ENCODE measurements at regions of chr6 and their contacts with region 1.

Region 1: GRCh38 chr6:116277124-116277523 is 2.6 kb downstream of the TSPYL1 start:
- DNase-seq: no peak
- ATAC-seq: no peak
- H3K4me3 ChIP-seq: peak overlapping the region; percentile 91 to 92
- H3K27ac ChIP-seq: peak overlapping the region; percentile 98
- H3K4me1 ChIP-seq: peaks cover 28% of the 10 kb centered on the region
- H3K27me3 ChIP-seq: no peaks in the 10 kb centered on the region
- CTCF ChIP-seq: no peak

Region 2: GRCh38 chr6:116218172-116218633 is 58.9 kb before region 1 on chr6:
- CTCF ChIA-PET with region 1: no interaction called
- POLR2A ChIA-PET with region 1: no interaction called
- in situ Hi-C with region 1: no loop called
- intact Hi-C with region 1: no loop called
- DNase-seq: no peak
- ATAC-seq: no peak
- H3K4me3 ChIP-seq: no peak overlapping the region
- H3K27ac ChIP-seq: no peak overlapping the region
- H3K4me1 ChIP-seq: no peaks in the 10 kb centered on the region
- H3K27me3 ChIP-seq: no peaks in the 10 kb centered on the region
- CTCF ChIP-seq: peak; percentile 71; the same call in 1 of the 2 replicates

Region 3: DNA sequence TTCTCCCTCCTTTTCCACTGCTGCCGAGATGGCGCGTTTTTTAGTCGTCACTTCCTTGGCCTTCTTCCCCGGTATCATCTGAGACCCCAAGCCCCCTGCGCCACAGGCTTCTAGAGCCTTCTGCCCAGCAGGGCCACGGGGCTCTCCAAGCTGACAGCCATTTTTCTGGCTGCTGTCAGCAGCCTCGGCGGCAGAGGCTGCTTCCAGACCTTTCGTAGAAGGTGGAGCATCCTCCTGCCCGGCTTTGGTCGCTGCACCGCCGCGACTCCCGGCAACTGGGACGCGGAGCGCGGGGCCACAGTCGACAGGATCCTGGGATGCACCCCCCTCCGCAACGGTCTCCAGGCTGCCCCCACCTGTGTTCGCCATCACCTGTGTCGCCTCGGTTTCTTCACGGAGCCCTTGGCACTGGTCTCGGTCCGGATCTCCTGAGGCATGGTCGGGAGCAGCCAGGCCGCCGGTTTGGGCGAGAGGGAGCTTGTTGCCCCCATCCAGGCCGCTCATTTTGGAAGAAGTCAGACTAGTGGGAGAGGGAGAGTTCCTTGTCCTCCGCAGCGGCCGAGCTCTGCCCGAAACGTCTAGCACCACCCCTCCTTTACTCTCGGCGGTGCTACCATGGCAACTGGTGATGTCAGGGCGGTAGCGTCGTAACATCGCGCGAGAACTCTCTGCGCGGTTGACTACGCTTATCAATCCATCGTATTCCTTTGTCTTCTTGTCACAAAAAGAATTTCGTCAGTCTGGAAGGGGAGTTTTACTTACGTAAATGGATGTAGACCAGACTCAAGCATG is 23.4 kb before region 1 on chr6 and contains the start of gene TSPYL4:
- CTCF ChIA-PET with region 1: no interaction called
- POLR2A ChIA-PET with region 1: interaction called, 10 read pairs
- in situ Hi-C with region 1: no loop called
- intact Hi-C with region 1: no loop called
- DNase-seq: peak; percentile 93
- ATAC-seq: peak; percentile 99
- H3K4me3 ChIP-seq: peak within 1 kb of the TSS; percentile 96 to 97
- H3K27ac ChIP-seq: peak within 1 kb of the TSS; percentile 99
- H3K4me1 ChIP-seq: peaks cover 32% of the 10 kb centered on the region
- H3K27me3 ChIP-seq: no peaks in the 10 kb centered on the region
- CTCF ChIP-seq: no peak
- total RNA-seq, gene TSPYL4: 7.6 TPM